CD8-positive, alpha-beta T cell (primary cell): ENCODE measurements at regions of chr11 and their contacts with region 1.

Region 1: GRCh38 chr11:74170694-74171629 is at the starts of genes C2CD3 and PPME1:
- DNase-seq: peak; percentile 95 to 100 (median 96)
- ATAC-seq: peak; percentile 94
- H3K4me3 ChIP-seq: peak within 1 kb of the TSS; percentile 80 to 86
- H3K4me3 Mint-ChIP-seq: no peak within 1 kb of the TSS
- H3K27ac ChIP-seq: peak within 1 kb of the TSS; percentile 64 to 82
- H3K27ac Mint-ChIP-seq: no peak within 1 kb of the TSS
- H3K4me1 ChIP-seq: peaks cover 35% of the 10 kb centered on the region
- H3K4me1 Mint-ChIP-seq: peaks cover 36% of the 10 kb centered on the region
- H3K27me3 ChIP-seq: no peaks in the 10 kb centered on the region
- H3K27me3 Mint-ChIP-seq: no peaks in the 10 kb centered on the region
- CTCF ChIP-seq: no peak
- total RNA-seq, gene C2CD3: 27.1 to 30.5 TPM
- total RNA-seq, gene PPME1: 12.4 to 15.0 TPM

Region 2: GRCh38 chr11:73376160-73376802 is 794.7 kb before region 1 on chr11 and contains the start of gene RELT:
- CTCF ChIA-PET with region 1: no interaction called
- POLR2A ChIA-PET with region 1: no interaction called
- intact Hi-C with region 1: loop called (anchors 5 kb)
- DNase-seq: peak; percentile 88 to 96 (median 92)
- ATAC-seq: peak; percentile 95
- H3K4me3 ChIP-seq: peak within 1 kb of the TSS; percentile 74 to 86
- H3K4me3 Mint-ChIP-seq: peak within 1 kb of the TSS; percentile 96
- H3K27ac ChIP-seq: peak within 1 kb of the TSS; percentile 82 to 83
- H3K27ac Mint-ChIP-seq: peak within 1 kb of the TSS; percentile 96
- H3K4me1 ChIP-seq: peaks cover 23% of the 10 kb centered on the region
- H3K4me1 Mint-ChIP-seq: peaks cover 43% of the 10 kb centered on the region
- H3K27me3 ChIP-seq: no peaks in the 10 kb centered on the region
- H3K27me3 Mint-ChIP-seq: no peaks in the 10 kb centered on the region
- CTCF ChIP-seq: peak; percentile 95
- total RNA-seq, gene RELT: 144 to 158 TPM

Region 3: DNA sequence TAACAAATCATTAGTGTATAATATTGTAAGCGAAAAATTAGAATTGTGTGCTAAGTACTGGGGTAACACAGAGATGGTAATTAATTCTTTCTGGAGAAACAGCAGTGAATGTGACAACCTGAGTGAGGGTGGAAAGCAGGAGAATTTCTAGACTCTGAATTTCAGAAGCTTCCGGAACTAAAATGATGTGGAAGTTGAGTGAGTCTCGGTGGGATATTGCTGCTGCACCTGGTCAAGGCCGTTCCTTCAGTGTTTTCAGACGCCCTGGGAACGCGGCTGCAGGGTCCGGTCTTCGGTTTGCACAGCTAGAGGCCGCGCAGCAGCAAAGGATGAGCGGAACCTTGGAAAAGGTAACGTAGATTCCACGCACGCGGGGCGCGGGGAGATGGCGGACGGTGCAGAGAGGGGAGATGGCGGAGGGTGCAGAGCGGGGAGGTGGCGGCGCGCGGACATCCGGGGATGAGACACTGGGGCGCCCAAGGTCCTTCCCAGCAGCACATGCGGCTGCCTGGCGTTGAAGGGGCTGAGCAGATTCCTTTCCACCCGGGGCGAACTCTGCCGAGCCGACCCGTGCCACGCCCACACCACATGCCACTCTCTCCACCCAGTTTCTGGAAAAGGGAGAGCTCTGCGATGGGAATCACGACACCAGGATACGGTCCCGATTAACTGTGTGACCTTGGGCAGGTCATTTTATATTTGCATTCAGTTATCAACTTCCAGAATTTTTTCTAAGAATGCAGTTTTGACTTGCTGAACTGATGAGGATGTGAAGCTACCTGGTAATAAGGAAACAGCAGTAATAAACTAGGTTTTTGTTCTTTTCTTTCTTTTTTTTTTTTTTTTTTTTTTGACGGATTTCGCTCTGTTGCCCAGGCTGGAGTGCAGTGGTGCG is 383.1 kb before region 1 on chr11 and contains the start of gene MRPL48:
- CTCF ChIA-PET with region 1: no interaction called
- POLR2A ChIA-PET with region 1: interaction called, 3 read pairs
- intact Hi-C with region 1: loop called in 1 of 2 experiments (anchors 2 kb)
- DNase-seq: peak; percentile 75 to 93 (median 88)
- ATAC-seq: peak; percentile 100
- H3K4me3 ChIP-seq: peak within 1 kb of the TSS; percentile 87 to 89
- H3K4me3 Mint-ChIP-seq: peak within 1 kb of the TSS; percentile 100
- H3K27ac ChIP-seq: peak within 1 kb of the TSS; percentile 77 to 82
- H3K27ac Mint-ChIP-seq: peak within 1 kb of the TSS; percentile 99
- H3K4me1 ChIP-seq: peaks cover 4% of the 10 kb centered on the region
- H3K4me1 Mint-ChIP-seq: peaks cover 33% of the 10 kb centered on the region
- H3K27me3 ChIP-seq: no peaks in the 10 kb centered on the region
- H3K27me3 Mint-ChIP-seq: no peaks in the 10 kb centered on the region
- CTCF ChIP-seq: no peak
- total RNA-seq, gene MRPL48: 10.2 to 13.7 TPM

Region 4: DNA sequence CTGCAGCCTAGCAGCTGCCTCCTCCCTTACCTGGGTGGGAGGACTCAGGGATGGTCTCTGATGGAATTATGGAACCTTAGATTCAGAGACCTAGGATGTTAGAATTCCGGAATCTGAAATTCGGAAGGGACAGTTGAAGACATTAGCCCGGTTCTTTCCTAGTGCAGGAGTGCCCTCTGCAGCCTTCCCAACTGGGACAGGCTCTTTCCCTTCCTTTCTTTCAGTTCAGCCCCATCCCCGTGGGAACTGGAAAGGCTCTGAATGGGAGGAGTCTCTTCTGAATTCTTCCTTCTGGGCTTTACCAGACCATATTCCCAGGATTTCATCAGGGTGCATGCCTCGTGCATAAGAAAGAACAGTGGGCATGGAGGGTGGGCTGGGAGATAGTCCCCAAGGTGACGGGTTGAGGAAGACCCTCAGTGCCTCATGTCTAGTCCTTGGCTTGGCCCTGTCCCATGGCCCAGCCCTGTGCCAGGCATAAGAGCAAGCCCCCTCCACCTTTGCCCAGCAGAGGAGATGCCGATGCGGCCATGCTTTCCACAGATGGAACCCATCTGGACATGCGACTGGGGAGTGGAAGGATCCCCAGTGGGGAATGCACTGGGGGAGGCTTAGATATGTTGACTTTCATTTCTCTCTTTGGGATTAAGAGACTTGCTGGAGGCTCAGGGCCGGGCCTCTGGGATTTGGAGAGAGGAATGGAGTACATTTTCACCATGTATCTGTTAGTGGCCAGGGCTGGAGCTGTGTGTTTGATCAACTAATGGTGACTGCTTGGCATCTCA is 205.7 kb before region 1 on chr11:
- CTCF ChIA-PET with region 1: interaction called, 3 read pairs
- POLR2A ChIA-PET with region 1: interaction called, 8 read pairs
- intact Hi-C with region 1: loop called (anchors 1 to 5 kb)
- DNase-seq: peak in 2 of 9 experiments; percentile 8 to 14
- ATAC-seq: no peak
- H3K4me3 ChIP-seq: no peak overlapping the region
- H3K4me3 Mint-ChIP-seq: no peak overlapping the region
- H3K27ac ChIP-seq: no peak overlapping the region
- H3K27ac Mint-ChIP-seq: peak overlapping the region; percentile 78
- H3K4me1 ChIP-seq: peaks cover 51% of the 10 kb centered on the region
- H3K4me1 Mint-ChIP-seq: peaks cover 44% of the 10 kb centered on the region
- H3K27me3 ChIP-seq: no peaks in the 10 kb centered on the region
- H3K27me3 Mint-ChIP-seq: no peaks in the 10 kb centered on the region
- CTCF ChIP-seq: no peak

Region 5: DNA sequence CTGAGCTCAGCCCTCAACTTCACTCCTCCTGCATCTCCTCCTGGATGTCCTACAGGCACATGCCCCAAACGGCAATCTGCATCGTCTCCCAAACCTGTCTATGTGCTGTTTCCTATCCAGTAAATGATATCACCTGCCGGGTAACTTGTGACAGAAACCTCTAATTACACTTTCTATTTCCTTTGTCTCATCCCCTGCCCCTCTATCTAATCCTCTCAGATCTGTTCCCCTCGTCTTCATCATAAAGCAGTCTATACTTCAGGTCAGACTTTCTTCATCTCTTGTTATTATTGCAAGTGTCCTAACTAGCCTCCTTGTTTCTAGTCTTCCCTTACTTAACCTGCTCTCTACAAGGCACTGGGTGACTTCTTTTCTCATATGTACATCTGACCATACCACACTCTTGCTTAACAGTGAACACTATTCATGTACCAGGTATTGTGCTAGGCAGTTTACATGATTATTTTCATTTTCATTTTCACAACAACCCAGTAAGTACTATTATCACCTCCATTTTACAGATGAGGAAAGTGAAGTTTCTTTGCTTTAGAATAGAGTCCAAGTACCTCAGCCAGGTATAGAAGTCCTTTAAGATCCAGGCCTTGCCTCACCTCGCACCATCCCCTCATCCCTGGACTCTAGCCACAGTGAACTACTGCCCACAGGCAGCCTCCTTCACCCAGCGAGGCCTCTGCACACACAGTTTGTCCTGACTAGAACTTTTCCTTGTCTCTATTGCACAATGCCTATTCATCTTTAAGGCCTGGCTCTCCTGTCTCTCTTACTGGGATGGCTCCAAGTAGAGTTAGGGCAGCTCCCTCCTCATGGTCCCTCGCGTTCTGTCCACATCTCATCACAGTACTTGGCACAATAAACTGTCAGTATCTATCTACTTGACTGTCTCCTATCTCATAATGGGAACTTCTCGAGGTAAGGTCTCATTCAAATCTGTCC is 140.0 kb before region 1 on chr11:
- CTCF ChIA-PET with region 1: no interaction called
- POLR2A ChIA-PET with region 1: no interaction called
- intact Hi-C with region 1: no loop called
- DNase-seq: peak in 1 of 9 experiments; percentile 36
- ATAC-seq: peak; percentile 33
- H3K4me3 ChIP-seq: no peak overlapping the region
- H3K4me3 Mint-ChIP-seq: peak overlapping the region; percentile 24
- H3K27ac ChIP-seq: peak overlapping the region in 1 of 2 experiments; percentile 64
- H3K27ac Mint-ChIP-seq: peak overlapping the region; percentile 60
- H3K4me1 ChIP-seq: peaks cover 7% of the 10 kb centered on the region
- H3K4me1 Mint-ChIP-seq: peaks cover 25% of the 10 kb centered on the region
- H3K27me3 ChIP-seq: no peaks in the 10 kb centered on the region
- H3K27me3 Mint-ChIP-seq: no peaks in the 10 kb centered on the region
- CTCF ChIP-seq: no peak

Region 6: DNA sequence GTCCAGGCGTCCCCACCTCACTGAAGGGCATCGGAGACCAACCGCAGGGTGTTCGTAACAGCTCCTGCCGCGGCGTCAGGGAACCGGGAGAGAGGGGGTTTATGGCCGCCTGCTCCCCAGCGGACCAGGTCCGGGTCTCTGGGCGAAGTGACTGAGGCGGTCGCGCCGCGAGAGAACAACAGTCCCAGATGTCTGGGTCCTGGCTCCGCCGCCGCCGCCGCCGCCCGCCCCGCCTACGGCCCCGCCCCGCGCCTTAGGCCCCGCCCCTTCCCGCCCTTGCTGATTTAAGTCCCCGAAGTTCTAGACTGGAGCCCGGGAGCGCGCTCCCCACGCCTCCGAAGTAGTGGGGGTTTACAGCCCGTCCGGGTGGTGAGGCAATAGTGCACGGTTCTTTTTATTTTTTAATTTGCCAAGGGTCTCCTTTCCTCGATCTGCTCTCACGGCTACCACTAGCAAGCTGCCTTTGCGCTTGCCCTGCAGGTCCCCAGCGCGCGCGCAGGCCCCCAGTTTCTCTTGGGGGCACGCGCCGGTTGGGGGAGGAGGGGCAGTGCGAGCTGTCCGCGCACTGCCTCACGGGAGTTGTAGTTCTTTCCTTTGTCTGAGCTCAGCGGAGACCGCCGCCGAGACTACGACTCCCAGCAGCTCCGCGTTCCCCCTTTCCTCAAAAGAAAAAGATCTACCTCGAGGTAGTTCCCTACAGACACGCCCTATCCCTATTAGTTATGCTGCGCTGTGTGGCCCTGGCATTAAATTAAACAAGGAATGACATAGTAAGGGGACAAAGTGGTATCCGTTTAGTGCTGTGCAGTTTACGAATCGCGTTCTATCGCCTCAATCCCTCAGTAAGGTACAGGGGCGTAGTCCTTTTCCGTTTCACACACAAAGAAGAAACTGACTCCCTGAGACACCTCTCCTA is 227.5 kb after region 1 on chr11 and contains the start of gene PGM2L1:
- CTCF ChIA-PET with region 1: no interaction called
- POLR2A ChIA-PET with region 1: interaction called, 3 read pairs
- intact Hi-C with region 1: loop called in 1 of 2 experiments (anchors 2 kb)
- DNase-seq: peak; percentile 85 to 97 (median 95)
- ATAC-seq: peak; percentile 86
- H3K4me3 ChIP-seq: peak within 1 kb of the TSS; percentile 51 to 92
- H3K4me3 Mint-ChIP-seq: peak within 1 kb of the TSS; percentile 99
- H3K27ac ChIP-seq: peak within 1 kb of the TSS; percentile 44 to 58
- H3K27ac Mint-ChIP-seq: peak within 1 kb of the TSS; percentile 96
- H3K4me1 ChIP-seq: peaks cover 10% of the 10 kb centered on the region
- H3K4me1 Mint-ChIP-seq: peaks cover 26% of the 10 kb centered on the region
- H3K27me3 ChIP-seq: no peaks in the 10 kb centered on the region
- H3K27me3 Mint-ChIP-seq: no peaks in the 10 kb centered on the region
- CTCF ChIP-seq: no peak
- total RNA-seq, gene PGM2L1: 5.2 to 5.8 TPM

Region 7: DNA sequence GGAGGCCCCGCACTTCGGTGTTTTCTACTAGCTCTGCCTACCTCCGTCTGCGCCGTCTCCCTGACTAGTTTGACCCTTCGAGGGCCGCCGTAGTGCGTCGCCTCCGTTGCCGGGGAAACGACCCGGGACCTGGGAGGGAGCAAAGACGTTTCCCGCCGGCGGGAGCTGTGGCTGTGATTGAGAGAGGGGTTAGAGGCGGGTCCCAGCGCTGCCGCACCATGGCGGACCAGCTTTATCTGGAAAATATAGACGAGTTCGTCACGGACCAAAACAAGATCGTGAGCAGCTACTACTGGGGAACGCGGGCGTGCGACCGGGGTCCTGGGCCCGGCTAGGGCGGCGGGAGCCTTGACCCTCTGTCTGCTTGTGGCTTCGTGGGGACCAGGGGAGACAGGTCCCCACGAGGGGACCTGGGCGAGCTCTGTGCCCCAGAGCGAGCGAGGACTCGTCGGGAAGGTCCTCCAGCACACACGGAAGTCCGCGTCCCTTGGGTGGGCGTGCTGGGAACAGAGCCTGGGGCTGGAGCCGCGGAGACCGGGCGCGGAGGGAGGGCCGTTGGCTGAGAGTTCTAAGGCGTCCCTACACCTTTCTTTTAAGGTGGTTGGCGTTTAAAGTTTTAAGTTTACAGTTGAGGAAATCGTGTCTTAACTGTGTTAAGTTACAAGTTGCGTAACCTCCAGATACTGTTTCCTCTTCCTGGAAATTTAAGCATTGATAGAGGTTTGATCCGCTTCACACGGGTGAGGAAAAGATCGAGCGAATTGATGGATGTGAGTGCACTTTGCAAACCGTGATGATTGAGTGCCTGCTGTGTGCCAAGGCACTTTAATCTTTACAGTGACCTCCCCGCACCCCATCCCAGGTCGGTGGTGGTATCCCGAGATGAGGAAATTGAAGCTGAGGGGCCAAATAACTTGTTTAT is 421.7 kb after region 1 on chr11 and contains the start of gene POLD3:
- CTCF ChIA-PET with region 1: no interaction called
- POLR2A ChIA-PET with region 1: no interaction called
- intact Hi-C with region 1: loop called (anchors 2 kb)
- DNase-seq: peak; percentile 88 to 96 (median 92)
- ATAC-seq: peak; percentile 94
- H3K4me3 ChIP-seq: peak within 1 kb of the TSS; percentile 88 to 100
- H3K4me3 Mint-ChIP-seq: peak within 1 kb of the TSS; percentile 99
- H3K27ac ChIP-seq: peak within 1 kb of the TSS; percentile 82 to 91
- H3K27ac Mint-ChIP-seq: peak within 1 kb of the TSS; percentile 97
- H3K4me1 ChIP-seq: peaks cover 11% of the 10 kb centered on the region
- H3K4me1 Mint-ChIP-seq: peaks cover 19% of the 10 kb centered on the region
- H3K27me3 ChIP-seq: no peaks in the 10 kb centered on the region
- H3K27me3 Mint-ChIP-seq: no peaks in the 10 kb centered on the region
- CTCF ChIP-seq: no peak
- total RNA-seq, gene POLD3: 4.0 TPM

Region 8: GRCh38 chr11:74948898-74949747 is 778.2 kb after region 1 on chr11 and contains the starts of genes SPCS2 and XRRA1:
- CTCF ChIA-PET with region 1: no interaction called
- POLR2A ChIA-PET with region 1: no interaction called
- intact Hi-C with region 1: loop called (anchors 2 kb)
- DNase-seq: peak; percentile 95 to 99 (median 97)
- ATAC-seq: peak; percentile 95
- H3K4me3 ChIP-seq: peak within 1 kb of the TSS; percentile 86 to 90
- H3K4me3 Mint-ChIP-seq: peak within 1 kb of the TSS; percentile 92
- H3K27ac ChIP-seq: peak within 1 kb of the TSS; percentile 80 to 88
- H3K27ac Mint-ChIP-seq: peak within 1 kb of the TSS; percentile 95
- H3K4me1 ChIP-seq: peaks cover 31% of the 10 kb centered on the region
- H3K4me1 Mint-ChIP-seq: peaks cover 63% of the 10 kb centered on the region
- H3K27me3 ChIP-seq: no peaks in the 10 kb centered on the region
- H3K27me3 Mint-ChIP-seq: no peaks in the 10 kb centered on the region
- CTCF ChIP-seq: no peak
- total RNA-seq, gene SPCS2: 38.1 to 42.3 TPM
- total RNA-seq, gene XRRA1: 19.2 to 20.9 TPM